ENCODE measurements at regions of chr20 and their contacts with region 1.

Region 1: DNA sequence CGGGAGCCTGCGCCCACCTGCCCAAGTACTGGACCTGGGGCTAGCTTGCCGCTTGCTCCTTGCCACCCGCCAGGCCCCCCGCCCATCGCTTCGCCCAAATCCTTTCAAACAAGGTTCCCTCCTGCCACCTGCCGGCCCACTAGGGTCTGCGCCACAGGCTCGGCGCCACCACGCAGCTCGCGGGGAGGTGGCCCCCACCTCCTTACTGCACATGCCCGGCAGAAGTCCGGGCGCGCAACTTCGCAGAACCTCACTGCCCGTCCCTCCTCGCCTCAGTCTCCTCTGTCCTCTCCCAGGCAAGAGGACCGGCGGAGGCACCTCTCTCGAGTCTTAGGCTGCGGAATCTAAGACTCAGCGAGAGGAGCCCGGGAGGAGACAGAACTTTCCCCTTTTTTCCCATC is 11.2 kb downstream of the GNAS-AS1 start:
- DNase-seq: no peak
- H3K4me3 ChIP-seq: no peak overlapping the region
- H3K27ac ChIP-seq: no peak overlapping the region
- H3K27me3 ChIP-seq: peaks cover 31% of the 10 kb centered on the region
- CTCF ChIP-seq: peak; percentile 64

Region 2: GRCh38 chr20:58650776-58651558 is 188.5 kb before region 1 on chr20 and contains the start of gene STX16:
- in situ Hi-C with region 1: loop called (anchors 25 kb)
- DNase-seq: peak; percentile 79
- H3K4me3 ChIP-seq: peak within 1 kb of the TSS; percentile 93
- H3K27ac ChIP-seq: peak within 1 kb of the TSS; percentile 58
- H3K27me3 ChIP-seq: no peaks in the 10 kb centered on the region
- CTCF ChIP-seq: peak; percentile 68

Measured in brain microvascular endothelial cell (primary cell).